ENCODE measurements at regions of chr6 and their contacts with region 1.

Region 1: GRCh38 chr6:154805288-154805911 is 72.2 kb downstream of the SCAF8 start:
- DNase-seq: no peak
- ATAC-seq: peak in 1 of 4 donors; percentile 53
- H3K4me3 ChIP-seq: no peak overlapping the region
- H3K27ac ChIP-seq: no peak overlapping the region
- H3K4me1 ChIP-seq: peaks cover 0 to 7% (median 0%) of the 10 kb centered on the region in 12 donors
- H3K27me3 ChIP-seq: no peaks in the 10 kb centered on the region
- CTCF ChIP-seq: peak; percentile 31 to 69 (median 57)
- POLR2A ChIP-seq: no peak

Region 2: DNA sequence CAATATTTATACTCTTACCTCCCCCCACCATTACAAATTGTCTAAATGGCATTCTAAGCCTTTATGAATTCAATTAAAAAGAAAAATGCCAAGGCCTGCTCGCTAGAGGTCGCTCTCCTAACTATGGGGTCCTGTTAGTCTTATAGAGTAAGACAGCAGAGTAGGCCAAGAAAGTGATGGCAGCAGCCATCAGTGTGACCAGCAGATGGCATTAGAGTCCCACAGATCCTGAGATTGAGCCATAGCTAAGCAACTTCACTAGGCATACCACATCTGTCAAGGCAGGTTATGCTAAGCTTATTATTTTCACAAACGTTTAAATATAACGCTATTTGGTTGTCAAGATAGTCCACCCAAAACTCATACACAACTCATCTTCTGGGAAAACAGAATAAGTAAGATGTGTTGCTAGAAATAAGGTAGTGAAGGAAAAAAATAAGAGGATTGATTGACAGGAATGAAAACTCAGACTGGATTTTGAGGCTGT is 129.8 kb before region 1 on chr6:
- intact Hi-C with region 1: loop called (anchors 1 to 5 kb)
- DNase-seq: peak; percentile 74 to 87 (median 83)
- ATAC-seq: peak; percentile 94 to 99 (median 98)
- H3K4me3 ChIP-seq: no peak overlapping the region
- H3K27ac ChIP-seq: no peak overlapping the region
- H3K4me1 ChIP-seq: no peaks in the 10 kb centered on the region
- H3K27me3 ChIP-seq: no peaks in the 10 kb centered on the region
- CTCF ChIP-seq: peak; percentile 95 to 100 (median 100)
- POLR2A ChIP-seq: no peak

Region 3: DNA sequence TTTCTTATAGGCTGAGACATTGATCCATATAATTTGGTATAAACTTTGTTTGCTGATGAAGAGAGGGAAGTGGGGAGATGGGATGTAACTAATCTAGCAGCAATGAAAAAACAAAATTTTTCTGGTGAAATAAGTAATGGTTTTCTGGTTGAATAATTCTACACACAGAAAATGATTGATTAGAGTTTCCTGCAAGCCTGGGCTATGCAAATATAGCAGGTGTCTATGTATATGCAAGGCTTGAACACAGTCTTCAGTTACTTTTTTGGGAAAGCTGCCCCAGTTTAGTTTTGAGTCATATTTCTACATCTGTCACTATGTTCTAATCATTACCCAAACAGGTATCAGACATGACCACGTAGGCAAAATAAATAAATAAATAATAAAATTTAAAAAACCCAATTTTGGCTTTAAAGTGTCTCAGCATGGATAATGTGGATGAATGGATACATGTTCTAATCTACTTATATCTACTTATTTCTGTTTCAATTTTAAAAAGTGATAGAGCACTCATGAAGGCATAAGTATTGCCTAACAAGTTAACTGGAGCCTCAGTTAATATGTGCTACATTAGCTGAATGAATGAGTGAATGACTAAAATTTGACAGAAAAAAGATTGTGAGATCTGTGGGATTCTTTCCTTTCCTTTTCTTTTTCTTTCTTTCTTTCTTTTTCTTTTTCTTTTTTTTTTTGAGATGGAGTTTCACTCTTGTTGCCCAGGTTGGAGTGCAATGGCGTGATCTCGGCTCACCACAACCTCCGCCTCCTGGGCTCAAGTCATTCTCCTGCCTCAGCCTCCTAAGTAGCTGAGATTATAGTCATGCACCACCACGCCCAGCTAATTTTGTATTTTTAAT is 546.1 kb after region 1 on chr6:
- intact Hi-C with region 1: no loop called
- DNase-seq: no peak
- ATAC-seq: no peak
- H3K4me3 ChIP-seq: no peak overlapping the region
- H3K27ac ChIP-seq: no peak overlapping the region
- H3K4me1 ChIP-seq: no peaks in the 10 kb centered on the region
- H3K27me3 ChIP-seq: peaks cover 0 to 11% (median 0%) of the 10 kb centered on the region in 9 donors
- CTCF ChIP-seq: no peak
- POLR2A ChIP-seq: no peak

Measured in heart left ventricle (tissue), 16 donors.